ENCODE measurements at regions of chr1 and their contacts with region 1.

Region 1: DNA sequence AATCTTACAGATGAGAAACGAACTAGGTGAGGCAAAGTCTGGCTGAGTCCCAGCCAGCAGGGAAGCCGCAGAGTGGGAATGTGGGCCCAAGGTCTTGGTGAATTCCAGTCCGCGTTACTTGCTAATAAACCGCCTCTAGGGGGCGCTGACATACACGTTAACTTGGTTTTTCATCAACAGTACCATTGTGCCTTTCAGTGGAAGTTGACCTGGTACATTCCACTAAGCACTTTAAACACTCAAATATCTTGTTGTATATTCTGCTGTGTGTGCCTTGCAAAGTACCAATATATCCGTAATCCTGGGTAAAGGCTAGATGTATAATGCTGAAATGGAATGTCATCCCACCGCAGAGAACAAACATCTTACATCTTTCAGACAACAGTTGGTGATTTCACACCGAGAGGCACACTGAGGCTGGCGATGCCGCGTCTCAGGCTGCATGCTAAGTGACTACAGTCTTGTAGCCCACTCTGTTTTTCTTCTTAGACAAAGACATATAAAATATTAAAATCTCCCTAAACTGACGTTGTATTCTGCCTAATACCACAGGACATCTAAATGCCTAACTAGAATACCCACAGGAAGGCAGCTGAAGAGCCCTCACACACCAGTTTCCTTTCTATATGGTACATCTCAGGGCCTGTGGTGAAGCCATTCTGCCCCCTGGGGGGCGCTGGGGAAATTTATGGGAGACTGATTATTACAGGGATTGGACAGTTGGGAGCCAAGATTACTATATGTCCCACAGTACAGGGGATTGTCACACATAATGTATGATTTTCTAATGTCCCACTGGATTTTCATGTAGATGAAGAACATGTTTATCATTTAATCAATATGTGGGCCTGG is 49.2 kb upstream of the C1orf198 start:
- DNase-seq: peak; percentile 62
- CTCF ChIP-seq: peak; percentile 65

Region 2: DNA sequence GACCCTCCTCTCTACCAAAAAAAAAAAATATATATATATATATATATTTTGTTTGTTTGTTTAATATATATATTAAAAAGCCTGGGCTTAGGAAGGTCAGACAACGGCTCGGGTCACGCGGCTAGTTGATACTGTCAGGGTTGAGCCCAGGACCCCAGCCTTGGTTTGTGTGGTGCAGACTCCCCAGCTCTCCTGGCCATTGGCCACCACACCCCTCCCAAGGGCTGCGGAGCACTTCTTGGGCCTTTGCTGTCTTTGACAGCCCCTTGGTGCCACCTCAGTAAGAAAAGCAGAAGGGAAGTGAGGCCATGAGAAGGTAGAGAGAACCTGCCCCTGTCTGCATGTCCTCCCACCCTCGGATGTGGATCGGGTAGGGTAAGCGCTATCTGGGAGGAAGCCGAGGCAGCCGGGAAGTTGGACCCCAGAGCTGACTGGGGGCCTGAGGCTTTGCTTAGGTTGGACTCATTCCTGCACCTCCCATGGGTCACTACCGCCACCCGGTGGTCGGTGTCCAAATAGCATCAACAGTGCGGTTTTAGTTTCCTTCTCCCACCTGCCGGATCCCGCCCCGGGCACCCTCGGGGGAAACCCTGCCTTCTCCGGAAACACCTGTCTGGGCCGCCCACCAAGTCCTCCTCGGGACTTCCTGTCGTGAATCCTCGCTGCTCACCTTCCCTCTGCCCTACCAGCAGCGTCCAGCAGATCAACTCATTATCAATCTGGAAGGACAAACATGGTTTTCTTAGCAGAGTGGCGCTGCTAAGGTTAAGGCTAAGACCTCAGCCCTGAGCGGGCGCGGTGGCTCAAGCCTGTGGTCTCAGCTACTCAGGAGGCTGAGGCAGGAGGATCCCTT is 293.7 kb after region 1 on chr1:
- in situ Hi-C with region 1: loop called (anchors 25 kb)
- DNase-seq: peak; percentile 90
- CTCF ChIP-seq: peak; percentile 93

Region 3: DNA sequence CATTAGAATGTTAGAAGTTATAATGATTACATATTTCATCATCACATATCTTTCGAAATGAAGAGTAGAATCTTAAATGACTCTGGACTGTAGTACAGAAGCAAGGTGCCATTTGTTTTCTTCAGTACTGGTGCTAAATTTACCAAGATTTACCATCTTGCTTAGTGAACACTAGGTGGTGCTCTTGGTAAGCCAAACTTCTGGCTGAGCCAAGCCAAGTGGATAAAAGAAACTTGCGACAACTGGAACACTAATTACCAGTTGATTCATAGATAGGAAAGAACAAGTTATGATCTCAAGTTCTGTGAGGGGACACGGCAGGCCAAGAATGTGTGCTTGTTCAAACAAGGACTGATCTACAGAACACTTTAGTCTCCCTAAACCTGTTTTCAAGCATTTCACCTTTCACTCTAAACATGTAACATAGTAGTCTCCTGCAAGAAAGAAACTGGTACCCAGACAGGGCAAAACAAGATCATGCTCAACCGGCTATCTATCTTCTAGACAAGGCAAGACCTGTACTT is 440.4 kb after region 1 on chr1:
- in situ Hi-C with region 1: no loop called
- DNase-seq: peak; percentile 63
- CTCF ChIP-seq: peak; percentile 76